MCF 10A (cell line): ENCODE measurements at regions of chrX and their contacts with region 1.

Region 1: DNA sequence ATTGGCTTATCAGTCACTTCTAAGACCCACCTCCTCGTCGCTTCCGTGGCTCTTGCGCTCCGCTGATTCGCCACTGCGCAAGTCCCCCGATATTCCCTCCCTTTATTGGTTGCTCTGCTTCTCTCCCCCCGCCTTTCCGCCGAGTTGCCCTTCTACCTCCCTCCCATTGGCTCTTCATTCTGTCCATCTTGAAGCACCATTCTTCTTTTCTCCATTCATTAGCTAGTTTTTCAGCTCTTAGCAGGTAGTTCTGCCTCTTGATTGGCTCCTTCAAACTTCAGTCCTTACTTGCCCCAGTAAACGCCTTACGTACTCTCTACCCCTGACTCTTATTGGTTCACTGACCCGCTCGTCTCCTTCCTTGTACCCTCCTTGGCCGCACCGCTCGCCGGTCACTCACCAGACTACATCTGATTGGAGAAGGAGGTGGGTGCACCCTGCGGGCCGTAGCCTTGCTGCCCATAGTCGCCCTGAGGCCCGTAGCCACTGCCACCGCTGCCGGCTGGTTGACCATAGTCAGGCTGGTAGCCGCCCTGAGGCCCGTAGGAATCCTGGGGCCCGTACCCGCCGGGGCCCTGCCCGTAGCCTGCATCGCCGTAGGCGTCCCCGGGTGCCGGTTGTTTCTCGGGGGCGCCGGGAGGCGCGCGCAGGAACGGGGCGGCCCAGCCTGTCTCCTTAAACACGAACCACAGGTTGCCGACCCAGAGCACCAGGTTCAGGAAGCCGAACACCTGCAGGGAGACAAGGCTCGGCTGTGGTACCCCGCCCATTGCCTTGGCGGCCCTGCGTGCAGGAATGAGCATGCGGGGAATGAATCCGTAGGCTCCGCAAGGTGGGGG is 5.1 kb upstream of the PRICKLE3 start:
- DNase-seq: peak; percentile 97
- H3K4me3 Mint-ChIP-seq: peak overlapping the region; percentile 83
- H3K27ac Mint-ChIP-seq: peak overlapping the region; percentile 86
- H3K4me1 Mint-ChIP-seq: peaks cover 16% of the 10 kb centered on the region
- H3K27me3 Mint-ChIP-seq: no peaks in the 10 kb centered on the region
- CTCF ChIP-seq: no peak

Region 2: GRCh38 chrX:48617542-48618340 is 573.5 kb before region 1 on chrX:
- CTCF ChIA-PET with region 1: no interaction called
- POLR2A ChIA-PET with region 1: no interaction called
- intact Hi-C with region 1: no loop called
- DNase-seq: peak; percentile 50
- H3K4me3 Mint-ChIP-seq: no peak overlapping the region
- H3K27ac Mint-ChIP-seq: no peak overlapping the region
- H3K4me1 Mint-ChIP-seq: no peaks in the 10 kb centered on the region
- H3K27me3 Mint-ChIP-seq: no peaks in the 10 kb centered on the region
- CTCF ChIP-seq: no peak

Region 3: DNA sequence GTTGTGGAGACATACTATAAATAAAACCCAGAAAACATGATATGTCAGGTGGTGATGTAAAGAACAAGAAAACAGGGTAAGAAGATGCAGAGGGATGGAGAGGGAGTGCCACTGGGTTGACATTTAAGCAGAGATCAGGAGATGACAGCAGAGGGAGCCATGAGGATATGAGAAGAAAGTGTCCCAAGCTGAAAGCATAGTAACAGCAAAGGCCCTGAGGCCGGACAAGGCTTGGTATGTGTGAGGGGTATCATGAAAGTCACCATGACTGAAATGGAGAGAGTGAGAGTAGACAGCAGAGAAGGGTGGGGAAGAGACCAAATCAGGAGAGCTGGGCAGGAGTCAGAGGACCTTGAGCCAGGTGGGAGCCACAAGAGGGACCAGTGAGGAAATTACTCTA is 71.2 kb before region 1 on chrX:
- CTCF ChIA-PET with region 1: interaction called, 5 read pairs
- POLR2A ChIA-PET with region 1: no interaction called
- intact Hi-C with region 1: loop called (anchors 1 kb)
- DNase-seq: no peak
- H3K4me3 Mint-ChIP-seq: no peak overlapping the region
- H3K27ac Mint-ChIP-seq: no peak overlapping the region
- H3K4me1 Mint-ChIP-seq: no peaks in the 10 kb centered on the region
- H3K27me3 Mint-ChIP-seq: no peaks in the 10 kb centered on the region
- CTCF ChIP-seq: no peak

Region 4: DNA sequence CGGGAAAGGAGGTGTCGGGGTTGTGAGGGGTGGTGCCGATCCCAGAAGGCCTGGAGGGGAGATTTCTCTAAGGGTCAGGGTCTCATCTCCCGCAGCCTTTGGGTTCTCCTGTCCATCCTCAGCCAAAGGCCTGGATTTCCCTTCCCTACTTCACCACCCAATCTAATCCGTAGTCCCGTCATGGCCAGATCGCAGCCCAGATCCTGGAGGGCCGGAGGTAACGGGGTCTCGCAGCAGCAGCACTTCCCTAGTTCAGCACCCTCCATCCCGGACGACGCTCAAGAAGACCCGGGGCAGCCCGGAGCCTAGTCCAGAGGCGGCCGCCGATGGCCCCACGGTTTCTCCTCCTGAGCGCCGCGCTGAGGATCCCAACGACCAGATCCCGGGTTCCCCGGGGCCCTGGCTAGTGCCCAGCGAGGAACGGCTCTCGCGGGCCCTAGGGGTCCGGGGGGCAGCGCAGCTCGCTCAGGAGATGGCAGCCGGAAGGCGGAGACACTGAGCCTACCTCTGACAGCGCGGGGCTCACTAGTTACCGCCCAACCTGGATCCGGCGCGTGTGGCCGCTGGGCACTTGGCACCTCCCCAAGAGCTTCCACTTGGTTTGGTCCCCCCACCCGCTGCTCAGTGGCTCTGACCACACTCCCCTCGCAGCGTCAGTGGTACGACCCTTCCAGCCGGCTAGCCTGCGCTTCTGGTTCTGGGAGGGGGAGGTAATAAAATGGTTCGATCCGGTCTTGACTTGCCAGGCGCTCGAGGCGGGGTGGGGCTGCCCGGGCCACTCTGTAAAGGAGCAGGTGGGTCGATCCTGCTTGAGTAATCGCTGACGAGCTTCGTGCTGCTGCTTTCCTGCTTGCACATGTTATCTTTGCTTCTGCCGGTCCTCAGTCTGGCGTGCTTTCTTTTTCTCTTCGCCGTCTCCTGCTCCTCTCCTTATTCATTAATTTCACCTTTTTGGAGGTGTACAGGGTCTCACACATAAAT is 25.1 kb before region 1 on chrX:
- CTCF ChIA-PET with region 1: interaction called, 4 read pairs
- POLR2A ChIA-PET with region 1: interaction called, 48 read pairs
- intact Hi-C with region 1: no loop called
- DNase-seq: peak; percentile 88
- H3K4me3 Mint-ChIP-seq: peak overlapping the region; percentile 91
- H3K27ac Mint-ChIP-seq: peak overlapping the region; percentile 97
- H3K4me1 Mint-ChIP-seq: peaks cover 13% of the 10 kb centered on the region
- H3K27me3 Mint-ChIP-seq: no peaks in the 10 kb centered on the region
- CTCF ChIP-seq: peak; percentile 21

Region 5: DNA sequence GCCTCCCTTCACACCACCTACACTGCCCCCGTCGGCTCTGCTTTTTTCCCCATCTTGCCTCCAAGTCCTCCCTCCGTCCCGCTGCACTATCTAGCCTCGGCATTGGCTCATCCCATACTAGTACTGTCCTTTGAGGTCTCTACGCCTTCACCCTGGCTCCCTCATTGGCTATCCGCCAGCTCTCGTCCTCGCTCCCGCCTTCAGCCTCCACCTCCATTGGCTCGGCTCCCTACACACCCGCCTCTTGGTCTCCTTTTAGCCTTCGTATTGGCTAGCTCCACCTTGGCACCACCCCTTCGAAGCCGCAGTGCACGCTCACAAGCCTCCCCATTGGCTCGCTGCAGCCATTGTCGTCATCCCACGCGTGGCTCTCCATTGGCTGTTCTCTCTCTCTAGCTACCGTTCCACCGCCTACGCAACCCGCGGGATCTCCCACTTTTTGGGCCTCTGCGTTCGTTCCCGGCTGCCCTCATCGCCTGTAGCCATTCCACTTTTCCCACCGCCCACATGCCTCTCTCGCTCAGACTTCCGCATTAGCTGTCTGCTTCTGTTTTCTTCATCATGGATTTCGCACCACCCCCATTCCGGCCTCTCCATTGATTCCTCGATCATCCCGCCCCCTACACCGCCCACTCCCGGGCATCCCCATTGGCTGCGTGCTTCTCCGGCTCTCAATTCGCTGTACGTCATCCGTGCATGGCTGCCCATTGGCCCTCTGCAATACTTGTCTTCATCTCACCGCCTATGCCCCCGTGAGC is 77.9 kb after region 1 on chrX:
- CTCF ChIA-PET with region 1: interaction called, 4 read pairs
- POLR2A ChIA-PET with region 1: interaction called, 12 read pairs
- intact Hi-C with region 1: loop called (anchors 1 kb)
- DNase-seq: peak; percentile 97
- H3K4me3 Mint-ChIP-seq: peak overlapping the region; percentile 90
- H3K27ac Mint-ChIP-seq: peak overlapping the region; percentile 97
- H3K4me1 Mint-ChIP-seq: peaks cover 12% of the 10 kb centered on the region
- H3K27me3 Mint-ChIP-seq: no peaks in the 10 kb centered on the region
- CTCF ChIP-seq: no peak

Region 6: GRCh38 chrX:49878834-49879659 is 687.8 kb after region 1 on chrX and contains the start of gene USP27X:
- CTCF ChIA-PET with region 1: interaction called, 3 read pairs
- POLR2A ChIA-PET with region 1: interaction called, 3 read pairs
- intact Hi-C with region 1: loop called (anchors 5 kb)
- DNase-seq: peak; percentile 68
- H3K4me3 Mint-ChIP-seq: peak within 1 kb of the TSS; percentile 74
- H3K27ac Mint-ChIP-seq: peak within 1 kb of the TSS; percentile 51
- H3K4me1 Mint-ChIP-seq: peaks cover 4% of the 10 kb centered on the region
- H3K27me3 Mint-ChIP-seq: peaks cover 11% of the 10 kb centered on the region
- CTCF ChIP-seq: peak; percentile 52
- total RNA-seq, gene USP27X: 0.93 and 1.1 TPM in 2 replicates

Region 7: GRCh38 chrX:50393902-50394301 is 1202.7 kb after region 1 on chrX:
- CTCF ChIA-PET with region 1: no interaction called
- POLR2A ChIA-PET with region 1: no interaction called
- intact Hi-C with region 1: no loop called
- DNase-seq: no peak
- H3K4me3 Mint-ChIP-seq: no peak overlapping the region
- H3K27ac Mint-ChIP-seq: no peak overlapping the region
- H3K4me1 Mint-ChIP-seq: no peaks in the 10 kb centered on the region
- H3K27me3 Mint-ChIP-seq: peaks cover 85% of the 10 kb centered on the region
- CTCF ChIP-seq: no peak